Natural killer cell (primary cell): ENCODE measurements at regions of chr3 and their contacts with region 1.

Region 1: DNA sequence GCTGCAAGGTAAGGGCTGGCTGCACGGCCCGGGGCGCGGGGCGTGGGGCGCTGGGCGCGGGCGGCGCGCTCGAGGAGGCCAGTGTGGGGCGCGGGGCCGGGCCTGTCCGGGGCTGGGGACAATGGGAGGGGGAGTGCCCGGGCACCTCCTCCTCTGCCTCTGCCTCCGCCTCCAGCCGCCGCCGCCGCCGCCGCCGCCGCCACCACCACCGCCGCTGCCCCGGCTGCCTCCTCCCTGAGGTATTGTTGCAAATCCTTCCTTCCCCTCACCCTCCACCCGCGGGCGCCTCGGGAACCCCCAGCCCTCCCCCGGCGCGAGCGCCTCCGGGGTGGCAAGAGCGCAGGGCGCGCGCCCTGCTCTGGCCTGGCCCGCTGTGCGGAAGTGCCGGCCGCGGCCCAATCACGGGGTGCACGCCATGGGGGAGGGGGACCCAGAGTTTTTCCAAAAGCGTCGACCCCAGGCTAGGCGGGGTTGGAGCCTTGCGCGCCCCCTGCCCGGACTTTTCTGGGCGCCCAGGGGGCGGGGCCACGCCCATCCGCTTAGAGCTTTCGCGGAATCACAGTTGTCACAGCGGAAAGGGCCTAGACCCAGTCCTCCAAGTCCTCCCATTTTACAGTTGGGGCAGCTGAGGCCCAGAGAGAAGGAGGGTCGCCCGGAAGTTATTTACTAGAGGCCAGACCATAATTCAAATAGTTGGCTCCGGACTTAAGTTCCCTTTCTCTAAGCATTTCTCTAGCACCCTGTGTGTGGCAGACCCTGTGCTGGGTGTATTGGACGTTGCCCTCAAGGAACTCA is at the start of gene LPP:
- DNase-seq: peak; percentile 89 to 91
- ATAC-seq: peak; percentile 85 to 94 (median 92)
- H3K4me3 ChIP-seq: peak within 1 kb of the TSS; percentile 95
- H3K4me3 Mint-ChIP-seq: peak within 1 kb of the TSS; percentile 96
- H3K27ac ChIP-seq: peak within 1 kb of the TSS; percentile 90
- H3K27ac Mint-ChIP-seq: peak within 1 kb of the TSS; percentile 89 to 95
- H3K4me1 ChIP-seq: peaks cover 34% of the 10 kb centered on the region
- H3K4me1 Mint-ChIP-seq: peaks cover 60 to 65% of the 10 kb centered on the region in 2 donors
- H3K27me3 ChIP-seq: no peaks in the 10 kb centered on the region
- H3K27me3 Mint-ChIP-seq: no peaks in the 10 kb centered on the region
- CTCF ChIP-seq: no peak
- total RNA-seq, gene LPP: 137 to 163 (median 149) TPM

Region 2: DNA sequence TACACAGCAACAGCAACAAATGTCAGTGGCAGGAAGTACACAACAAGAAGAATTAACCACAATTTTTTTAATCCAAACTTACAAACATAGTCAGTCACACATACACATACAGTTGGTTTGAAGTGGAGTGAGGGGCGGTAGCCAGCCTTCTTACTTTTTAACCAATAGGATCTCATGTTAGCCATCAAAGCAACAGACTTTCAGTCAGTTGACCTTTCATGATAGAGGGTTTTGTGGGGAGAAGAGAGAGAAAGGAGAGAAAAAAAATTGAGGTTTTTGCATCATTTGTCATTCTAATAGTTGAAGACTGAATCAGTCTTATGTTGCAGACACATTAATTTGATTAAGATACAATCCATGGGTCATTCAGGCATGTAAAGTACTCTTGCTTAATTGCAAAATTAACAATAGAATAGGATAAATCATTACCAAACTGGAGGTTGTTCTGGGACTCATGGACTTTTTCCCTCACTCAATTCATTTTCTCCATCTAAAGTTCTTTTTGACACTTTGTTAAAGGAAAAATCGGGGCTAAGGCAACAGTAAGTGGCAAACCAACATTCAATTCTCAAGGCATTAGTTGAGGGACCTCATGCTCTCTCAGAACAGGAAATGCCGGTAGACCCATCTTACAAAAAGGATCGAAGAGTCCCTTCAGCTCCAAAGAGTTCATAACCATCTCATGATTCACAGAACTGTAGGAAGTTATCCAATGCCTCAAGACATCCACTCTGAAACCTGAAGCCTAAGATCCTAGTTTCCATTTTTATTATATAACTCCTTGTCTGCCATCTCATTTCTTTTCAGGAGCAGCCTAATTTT is 159.8 kb before region 1 on chr3:
- intact Hi-C with region 1: loop called (anchors 2 kb)
- DNase-seq: peak in 1 of 2 donors; percentile 65
- ATAC-seq: peak; percentile 87 to 92 (median 89)
- H3K4me3 ChIP-seq: no peak overlapping the region
- H3K4me3 Mint-ChIP-seq: peak overlapping the region; percentile 63
- H3K27ac ChIP-seq: peak overlapping the region; percentile 74
- H3K27ac Mint-ChIP-seq: peak overlapping the region; percentile 72 to 87
- H3K4me1 ChIP-seq: peaks cover 22% of the 10 kb centered on the region
- H3K4me1 Mint-ChIP-seq: peaks cover 61 to 66% of the 10 kb centered on the region in 2 donors
- H3K27me3 ChIP-seq: no peaks in the 10 kb centered on the region
- H3K27me3 Mint-ChIP-seq: no peaks in the 10 kb centered on the region
- CTCF ChIP-seq: no peak

Region 3: GRCh38 chr3:188185717-188186251 is 31.6 kb after region 1 on chr3:
- intact Hi-C with region 1: loop called (anchors 5 kb)
- DNase-seq: peak in 1 of 2 donors; percentile 18
- ATAC-seq: no peak
- H3K4me3 ChIP-seq: no peak overlapping the region
- H3K4me3 Mint-ChIP-seq: no peak overlapping the region
- H3K27ac ChIP-seq: no peak overlapping the region
- H3K27ac Mint-ChIP-seq: peak overlapping the region in 1 of 2 donors; percentile 15
- H3K4me1 ChIP-seq: peaks cover 23% of the 10 kb centered on the region
- H3K4me1 Mint-ChIP-seq: peaks cover 58 to 67% of the 10 kb centered on the region in 2 donors
- H3K27me3 ChIP-seq: no peaks in the 10 kb centered on the region
- H3K27me3 Mint-ChIP-seq: no peaks in the 10 kb centered on the region
- CTCF ChIP-seq: no peak

Region 4: GRCh38 chr3:188339410-188340295 is 185.4 kb after region 1 on chr3:
- intact Hi-C with region 1: loop called (anchors 1 kb)
- DNase-seq: peak; percentile 37 to 69
- ATAC-seq: peak; percentile 83 to 93 (median 91)
- H3K4me3 ChIP-seq: no peak overlapping the region
- H3K4me3 Mint-ChIP-seq: peak overlapping the region; percentile 79
- H3K27ac ChIP-seq: peak overlapping the region; percentile 62
- H3K27ac Mint-ChIP-seq: peak overlapping the region; percentile 82
- H3K4me1 ChIP-seq: peaks cover 7% of the 10 kb centered on the region
- H3K4me1 Mint-ChIP-seq: peaks cover 44 to 55% of the 10 kb centered on the region in 2 donors
- H3K27me3 ChIP-seq: no peaks in the 10 kb centered on the region
- H3K27me3 Mint-ChIP-seq: peaks cover 0 to 9% of the 10 kb centered on the region in 2 donors
- CTCF ChIP-seq: no peak

Region 5: GRCh38 chr3:188446014-188446413 is 291.8 kb after region 1 on chr3:
- intact Hi-C with region 1: loop called (anchors 10 kb)
- DNase-seq: no peak
- ATAC-seq: peak; percentile 25 to 58 (median 29)
- H3K4me3 ChIP-seq: no peak overlapping the region
- H3K4me3 Mint-ChIP-seq: peak overlapping the region; percentile 79
- H3K27ac ChIP-seq: peak overlapping the region; percentile 57
- H3K27ac Mint-ChIP-seq: peak overlapping the region; percentile 81 to 87
- H3K4me1 ChIP-seq: peaks cover 31% of the 10 kb centered on the region
- H3K4me1 Mint-ChIP-seq: peaks cover 47 to 49% of the 10 kb centered on the region in 2 donors
- H3K27me3 ChIP-seq: no peaks in the 10 kb centered on the region
- H3K27me3 Mint-ChIP-seq: no peaks in the 10 kb centered on the region
- CTCF ChIP-seq: no peak